ENCODE measurements at regions of chr9 and their contacts with region 1.

Region 1: DNA sequence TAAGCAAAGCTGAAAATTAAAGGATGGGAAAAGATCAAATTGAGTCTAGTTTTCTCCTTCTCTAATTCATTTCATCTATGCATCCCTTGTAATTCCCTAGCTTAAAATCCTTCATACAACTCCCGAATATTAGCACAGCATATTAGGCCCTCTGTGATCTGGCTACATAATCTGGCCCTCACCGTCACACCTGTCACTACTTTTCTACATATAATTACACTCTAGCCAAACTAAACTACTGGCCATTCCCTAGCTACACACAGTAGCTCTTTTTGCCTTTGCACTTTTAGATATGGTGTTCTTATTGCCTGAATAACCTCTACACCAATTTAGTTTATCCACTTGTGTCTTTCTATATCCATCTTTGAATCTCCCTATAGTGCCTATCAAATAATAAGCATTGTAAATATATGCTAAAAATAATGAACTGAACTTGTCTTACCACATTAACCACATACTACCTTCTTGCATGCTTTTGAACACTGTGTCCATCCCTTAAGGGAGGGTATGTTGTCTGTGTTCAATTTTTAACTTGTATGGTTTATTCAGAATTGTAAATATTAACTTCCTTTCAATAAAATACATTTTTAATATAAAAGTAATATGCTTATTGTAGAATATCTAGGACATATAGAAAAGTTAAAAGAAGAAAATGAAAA is 15.9 kb downstream of the RANBP6 start:
- DNase-seq: no peak
- ATAC-seq: no peak
- H3K4me3 ChIP-seq: no peak overlapping the region
- H3K4me3 Mint-ChIP-seq: no peak overlapping the region
- H3K27ac ChIP-seq: no peak overlapping the region
- H3K27ac Mint-ChIP-seq: no peak overlapping the region
- H3K4me1 ChIP-seq: peaks cover 47% of the 10 kb centered on the region
- H3K4me1 Mint-ChIP-seq: peaks cover 68% of the 10 kb centered on the region
- H3K27me3 ChIP-seq: no peaks in the 10 kb centered on the region
- H3K27me3 Mint-ChIP-seq: no peaks in the 10 kb centered on the region
- CTCF ChIP-seq: no peak

Region 2: GRCh38 chr9:5958273-5958672 is 41.3 kb before region 1 on chr9:
- CTCF ChIA-PET with region 1: no interaction called
- POLR2A ChIA-PET with region 1: no interaction called
- intact Hi-C with region 1: loop called in 1 of 2 experiments (anchors 5 kb)
- DNase-seq: no peak
- ATAC-seq: no peak
- H3K4me3 ChIP-seq: no peak overlapping the region
- H3K4me3 Mint-ChIP-seq: no peak overlapping the region
- H3K27ac ChIP-seq: no peak overlapping the region
- H3K27ac Mint-ChIP-seq: peak overlapping the region; percentile 60
- H3K4me1 ChIP-seq: no peaks in the 10 kb centered on the region
- H3K4me1 Mint-ChIP-seq: peaks cover 9% of the 10 kb centered on the region
- H3K27me3 ChIP-seq: no peaks in the 10 kb centered on the region
- H3K27me3 Mint-ChIP-seq: no peaks in the 10 kb centered on the region
- CTCF ChIP-seq: no peak

Region 3: GRCh38 chr9:5988265-5988664 is 11.3 kb before region 1 on chr9:
- CTCF ChIA-PET with region 1: no interaction called
- POLR2A ChIA-PET with region 1: no interaction called
- intact Hi-C with region 1: loop called in 1 of 2 experiments (anchors 2 kb)
- DNase-seq: no peak
- ATAC-seq: no peak
- H3K4me3 ChIP-seq: no peak overlapping the region
- H3K4me3 Mint-ChIP-seq: no peak overlapping the region
- H3K27ac ChIP-seq: no peak overlapping the region
- H3K27ac Mint-ChIP-seq: no peak overlapping the region
- H3K4me1 ChIP-seq: no peaks in the 10 kb centered on the region
- H3K4me1 Mint-ChIP-seq: peaks cover 36% of the 10 kb centered on the region
- H3K27me3 ChIP-seq: no peaks in the 10 kb centered on the region
- H3K27me3 Mint-ChIP-seq: no peaks in the 10 kb centered on the region
- CTCF ChIP-seq: no peak